ENCODE measurements at regions of chr17 and their contacts with region 1.

Region 1: DNA sequence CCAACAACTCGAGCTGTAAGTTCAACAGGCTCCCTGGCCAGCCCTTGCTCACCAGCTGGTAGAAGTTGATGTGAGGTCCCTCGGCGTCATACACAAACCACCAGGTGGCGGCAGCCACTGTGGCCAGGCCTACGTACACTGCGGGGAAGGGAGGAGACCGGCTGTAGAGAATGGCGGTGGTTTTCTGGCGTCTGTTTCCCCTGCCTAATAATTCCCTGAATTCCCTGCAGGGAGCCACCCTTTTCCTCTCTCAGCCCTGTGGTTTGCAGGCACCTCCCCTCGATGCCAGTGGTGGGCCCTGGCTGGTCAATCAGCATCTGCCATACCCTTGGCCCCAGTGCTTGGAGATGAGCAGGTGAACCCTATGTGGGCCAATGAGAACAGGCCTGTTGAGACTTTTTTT is 18.9 kb upstream of the P2RX1 start:
- DNase-seq: peak; percentile 80 to 85 (median 81)
- ATAC-seq: peak; percentile 97 to 100 (median 98)
- H3K4me3 ChIP-seq: no peak overlapping the region
- H3K27ac ChIP-seq: no peak overlapping the region
- H3K4me1 ChIP-seq: no peaks in the 10 kb centered on the region
- H3K27me3 ChIP-seq: no peaks in the 10 kb centered on the region
- CTCF ChIP-seq: peak; percentile 78 to 83 (median 79)
- POLR2A ChIP-seq: no peak

Region 2: DNA sequence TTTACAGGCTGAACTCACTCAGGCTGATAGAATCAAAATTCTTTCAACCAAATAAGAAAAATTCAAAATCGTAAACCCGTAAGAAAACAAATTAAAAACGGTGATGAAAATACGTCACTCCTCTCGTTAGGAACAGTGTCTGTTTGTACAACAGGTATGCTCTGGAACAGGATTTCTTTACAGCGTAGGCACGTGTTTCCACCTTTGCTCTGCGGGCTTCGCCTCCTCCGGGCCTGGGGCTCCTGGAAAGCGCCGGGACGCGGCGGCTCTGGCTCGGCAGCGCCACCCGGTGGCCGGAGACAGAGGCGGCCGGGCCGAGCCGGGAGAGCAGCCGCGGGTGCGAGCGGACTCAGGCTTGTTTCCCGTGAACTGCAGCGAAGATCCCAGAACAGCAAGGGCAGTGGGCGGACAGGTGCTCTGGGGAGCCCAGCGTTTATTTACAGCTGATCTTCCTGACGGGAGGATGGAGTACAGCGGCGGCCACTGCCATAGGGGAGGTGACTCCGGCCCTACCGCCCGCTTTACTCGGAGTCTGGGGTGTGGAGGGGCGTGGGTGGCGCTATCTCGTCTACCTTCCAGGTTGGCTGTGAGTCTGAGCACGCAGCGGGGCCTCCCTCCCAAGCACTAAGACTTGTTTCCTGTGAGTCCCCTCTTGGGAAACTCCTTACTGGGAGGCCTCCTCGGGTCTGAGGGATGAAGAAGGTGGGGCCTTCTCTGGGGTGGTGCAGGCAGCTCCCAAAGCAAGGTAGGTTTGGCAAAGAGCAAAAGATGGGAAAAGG is 69.6 kb after region 1 on chr17:
- intact Hi-C with region 1: loop called in 1 of 2 experiments (anchors 10 kb)
- DNase-seq: peak in 2 of 3 donors; percentile 61 to 67
- ATAC-seq: peak; percentile 55 to 74 (median 60)
- H3K4me3 ChIP-seq: no peak overlapping the region
- H3K27ac ChIP-seq: no peak overlapping the region
- H3K4me1 ChIP-seq: peaks cover 0 to 14% (median 7%) of the 10 kb centered on the region in 4 donors
- H3K27me3 ChIP-seq: no peaks in the 10 kb centered on the region
- CTCF ChIP-seq: peak; percentile 71 to 95 (median 81)
- POLR2A ChIP-seq: no peak

Region 3: DNA sequence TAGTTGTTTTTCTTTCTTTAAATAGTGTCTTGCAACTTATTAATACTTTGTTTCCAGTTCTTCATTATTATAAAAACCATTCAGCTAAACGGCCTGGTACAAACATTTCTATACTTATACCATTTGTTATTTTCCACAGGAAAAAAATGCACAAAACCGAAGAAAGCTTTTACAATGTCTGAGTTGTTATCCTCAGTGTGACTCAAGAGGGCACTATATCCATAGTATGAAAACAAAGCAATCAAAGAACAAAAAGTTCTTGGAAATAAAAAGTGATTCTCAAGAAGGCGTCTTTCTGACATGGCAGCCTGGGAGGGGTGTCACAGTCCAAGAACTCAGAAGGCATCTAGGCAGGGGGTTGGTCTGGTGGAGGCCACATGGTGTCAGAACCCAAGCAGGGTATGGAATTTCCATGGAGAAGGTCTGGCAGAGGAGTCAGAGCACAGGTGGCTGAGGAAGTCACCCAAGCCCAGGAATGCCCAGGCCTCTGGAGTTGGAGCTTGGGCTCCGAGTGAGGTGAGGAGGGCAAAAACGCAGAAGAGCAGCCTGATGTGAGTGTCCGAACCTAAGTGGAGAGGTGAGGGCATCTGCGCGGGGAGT is 100.0 kb after region 1 on chr17:
- intact Hi-C with region 1: no loop called
- DNase-seq: no peak
- ATAC-seq: no peak
- H3K4me3 ChIP-seq: no peak overlapping the region
- H3K27ac ChIP-seq: no peak overlapping the region
- H3K4me1 ChIP-seq: peaks cover 0 to 19% (median 6%) of the 10 kb centered on the region in 4 donors
- H3K27me3 ChIP-seq: no peaks in the 10 kb centered on the region
- CTCF ChIP-seq: no peak
- POLR2A ChIP-seq: no peak

Region 4: DNA sequence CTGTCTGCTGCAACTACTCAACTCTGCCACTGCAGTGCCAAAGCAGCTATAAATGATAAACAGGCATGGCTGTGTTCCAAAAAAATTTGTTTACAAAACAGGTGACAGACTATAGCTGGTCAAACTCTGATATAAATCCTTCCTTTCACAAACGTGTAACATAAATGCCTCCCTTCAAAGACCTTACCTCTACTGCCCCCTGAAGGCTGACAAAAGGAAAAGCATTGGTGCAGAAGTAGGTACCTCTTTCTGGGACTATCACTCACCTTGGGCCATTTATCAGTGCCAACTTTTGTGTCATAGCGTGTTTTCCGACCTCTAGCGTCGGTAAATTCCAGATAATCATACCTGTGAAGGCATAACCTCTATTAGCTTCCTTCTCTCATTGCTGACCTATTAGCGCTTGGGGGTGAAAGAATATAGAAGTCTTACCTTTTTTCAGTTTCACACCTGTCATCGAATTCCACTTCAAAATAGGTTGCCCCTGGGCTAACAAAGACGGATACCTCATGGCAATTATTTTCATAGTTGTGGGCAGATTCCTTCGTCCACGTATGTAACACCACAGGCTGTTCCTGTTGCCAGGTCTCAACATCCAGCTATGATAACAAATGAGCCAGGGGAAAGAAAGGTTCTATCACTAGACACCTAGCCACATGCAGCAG is 139.8 kb after region 1 on chr17:
- intact Hi-C with region 1: loop called (anchors 10 kb)
- DNase-seq: no peak
- ATAC-seq: peak; percentile 62 to 81 (median 78)
- H3K4me3 ChIP-seq: no peak overlapping the region
- H3K27ac ChIP-seq: peak overlapping the region in 1 of 3 donors; percentile 16
- H3K4me1 ChIP-seq: no peaks in the 10 kb centered on the region
- H3K27me3 ChIP-seq: no peaks in the 10 kb centered on the region
- CTCF ChIP-seq: peak; percentile 47 to 72 (median 60)
- POLR2A ChIP-seq: no peak